ENCODE measurements at regions of chr1 and their contacts with region 1.

Region 1: GRCh38 chr1:33472349-33472980 is at the start of gene ZSCAN20:
- DNase-seq: peak; percentile 95
- H3K4me3 Mint-ChIP-seq: peak within 1 kb of the TSS; percentile 85
- H3K27ac Mint-ChIP-seq: peak within 1 kb of the TSS; percentile 57
- H3K4me1 Mint-ChIP-seq: peaks cover 22% of the 10 kb centered on the region
- H3K27me3 Mint-ChIP-seq: no peaks in the 10 kb centered on the region
- total RNA-seq, gene ZSCAN20: 2.0 and 2.8 TPM in 2 replicates

Region 2: GRCh38 chr1:33094971-33095604 is 377.4 kb before region 1 on chr1:
- intact Hi-C with region 1: loop called (anchors 10 kb)
- DNase-seq: peak; percentile 77
- H3K4me3 Mint-ChIP-seq: no peak overlapping the region
- H3K27ac Mint-ChIP-seq: no peak overlapping the region
- H3K4me1 Mint-ChIP-seq: peaks cover 59% of the 10 kb centered on the region
- H3K27me3 Mint-ChIP-seq: no peaks in the 10 kb centered on the region

Region 3: DNA sequence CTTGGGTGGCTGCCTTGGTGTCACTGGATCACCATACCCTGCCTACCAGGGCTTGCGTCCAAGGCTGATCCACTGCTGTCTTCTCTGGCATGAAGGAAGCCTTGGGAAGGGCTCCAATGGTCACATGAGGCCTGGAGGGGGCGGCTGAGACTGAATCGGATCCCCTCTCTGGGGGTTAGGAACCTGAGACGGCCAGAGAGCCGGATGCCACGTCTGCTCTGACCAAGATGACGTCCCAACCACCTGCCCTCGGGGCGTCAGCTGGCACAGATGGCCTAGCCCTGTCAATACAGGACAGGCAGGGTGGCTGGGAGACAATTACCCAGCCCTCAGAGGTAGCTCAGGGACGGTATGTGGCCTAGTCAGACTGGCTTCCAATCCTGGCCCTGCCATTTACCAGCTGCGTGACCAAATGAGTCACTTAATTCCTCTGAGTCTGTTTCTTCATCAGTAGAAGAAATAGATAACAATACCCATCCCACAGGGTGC is 296.1 kb before region 1 on chr1:
- intact Hi-C with region 1: no loop called
- DNase-seq: no peak
- H3K4me3 Mint-ChIP-seq: no peak overlapping the region
- H3K27ac Mint-ChIP-seq: no peak overlapping the region
- H3K4me1 Mint-ChIP-seq: peaks cover 23% of the 10 kb centered on the region
- H3K27me3 Mint-ChIP-seq: no peaks in the 10 kb centered on the region

Region 4: DNA sequence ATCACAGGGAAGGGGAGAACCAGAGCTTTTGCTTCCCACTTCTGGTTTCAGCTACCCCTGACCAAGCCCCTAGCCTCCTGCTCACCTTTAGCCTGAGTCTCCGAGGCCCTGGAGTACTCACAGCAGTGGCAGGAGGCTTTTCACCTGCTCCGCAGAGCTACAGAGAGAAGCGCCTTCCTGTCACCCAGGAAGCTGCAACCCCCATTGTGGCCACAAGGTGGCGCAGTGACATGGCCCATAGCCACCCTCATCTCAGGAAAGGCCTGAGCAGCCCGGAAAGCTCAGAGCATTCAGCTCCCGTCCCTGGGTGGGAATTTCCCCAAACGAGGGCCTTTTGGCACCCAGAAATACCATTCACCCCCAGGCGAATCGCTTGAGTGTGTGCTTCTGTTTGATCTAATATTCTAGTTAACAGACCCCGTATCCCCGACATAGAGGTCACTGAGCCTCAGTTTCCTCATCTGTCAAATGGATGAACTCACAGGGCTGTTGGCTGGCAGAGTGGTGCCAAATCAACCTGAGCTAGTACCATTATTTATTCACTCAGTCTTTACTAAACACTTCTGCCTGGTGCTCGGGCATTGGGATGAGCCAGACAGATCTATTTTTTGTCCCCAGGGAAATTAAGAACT is 176.9 kb before region 1 on chr1:
- intact Hi-C with region 1: loop called (anchors 2 kb)
- DNase-seq: peak; percentile 96
- H3K4me3 Mint-ChIP-seq: no peak overlapping the region
- H3K27ac Mint-ChIP-seq: peak overlapping the region; percentile 12
- H3K4me1 Mint-ChIP-seq: peaks cover 15% of the 10 kb centered on the region
- H3K27me3 Mint-ChIP-seq: no peaks in the 10 kb centered on the region

Region 5: GRCh38 chr1:33349778-33350610 is 122.5 kb before region 1 on chr1:
- intact Hi-C with region 1: loop called (anchors 1 kb)
- DNase-seq: peak; percentile 95
- H3K4me3 Mint-ChIP-seq: peak overlapping the region; percentile 95
- H3K27ac Mint-ChIP-seq: peak overlapping the region; percentile 90
- H3K4me1 Mint-ChIP-seq: peaks cover 39% of the 10 kb centered on the region
- H3K27me3 Mint-ChIP-seq: peaks cover 2% of the 10 kb centered on the region

Region 6: DNA sequence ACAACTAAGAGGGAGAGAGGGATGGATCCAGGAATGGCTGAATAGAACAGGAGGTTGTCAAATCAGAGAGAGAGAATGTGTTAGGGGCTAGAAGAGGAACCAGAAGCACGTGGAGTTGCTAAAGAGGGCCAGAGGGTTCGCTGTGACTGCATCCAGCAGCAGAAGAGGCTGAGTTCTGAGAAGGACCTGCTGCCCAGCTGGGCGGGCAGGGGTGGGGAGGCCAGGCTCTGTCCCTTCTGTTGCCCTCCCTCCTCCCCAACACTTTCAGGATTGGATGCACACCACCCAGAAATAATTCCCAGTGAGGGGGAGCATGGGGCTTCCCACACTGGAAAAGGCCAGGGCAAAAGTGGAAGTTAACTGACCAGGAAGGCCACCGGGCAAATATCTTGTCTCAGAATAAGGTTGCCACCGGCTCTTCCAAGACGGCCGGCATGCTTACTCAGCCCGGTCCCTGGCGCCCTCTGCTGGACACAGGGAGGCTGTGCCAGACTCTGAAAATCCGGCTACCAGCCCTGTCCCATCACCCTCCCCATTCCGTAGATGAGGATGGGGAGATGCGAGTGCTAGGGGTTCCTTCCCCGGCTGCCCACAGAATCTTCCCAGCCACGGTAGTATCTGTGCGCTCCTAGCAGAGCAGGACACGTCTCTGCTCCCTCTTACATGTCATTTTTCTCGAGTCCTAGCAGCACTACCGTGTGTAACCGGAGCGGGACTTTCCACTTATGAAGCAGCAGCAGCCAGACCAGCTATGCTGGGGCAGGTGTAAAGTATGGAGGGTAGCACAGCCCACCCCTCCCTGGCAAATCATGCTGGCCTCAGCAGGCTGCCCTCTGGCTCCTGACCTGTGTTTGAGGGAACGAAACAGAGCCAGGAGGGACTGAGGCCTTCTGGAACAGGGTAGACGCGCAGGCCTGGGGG is 104.7 kb before region 1 on chr1:
- intact Hi-C with region 1: loop called (anchors 5 kb)
- DNase-seq: peak; percentile 95
- H3K4me3 Mint-ChIP-seq: no peak overlapping the region
- H3K27ac Mint-ChIP-seq: no peak overlapping the region
- H3K4me1 Mint-ChIP-seq: peaks cover 2% of the 10 kb centered on the region
- H3K27me3 Mint-ChIP-seq: no peaks in the 10 kb centered on the region

Region 7: GRCh38 chr1:33430692-33431593 is 41.5 kb before region 1 on chr1 and contains the start of gene PHC2:
- intact Hi-C with region 1: no loop called
- DNase-seq: peak; percentile 95
- H3K4me3 Mint-ChIP-seq: peak within 1 kb of the TSS; percentile 70
- H3K27ac Mint-ChIP-seq: no peak within 1 kb of the TSS
- H3K4me1 Mint-ChIP-seq: peaks cover 4% of the 10 kb centered on the region
- H3K27me3 Mint-ChIP-seq: peaks cover 27% of the 10 kb centered on the region
- total RNA-seq, gene PHC2: 32.4 and 34.2 TPM in 2 replicates

Measured in activated CD4-positive, alpha-beta T cell treated with anti-CD3 and anti-CD28 coated beads, Interleukin-2, amount 10 ng/mL, durations not matched to agents 24 days and 14 days (primary cell).